Activated CD4-positive, alpha-beta memory T cell treated with anti-CD3 and anti-CD28 coated beads, Interleukin-2, amount 10 ng/mL, durations not matched to agents 7 days and 5 days (primary cell): ENCODE measurements at regions of chr5 and their contacts with region 1.

Region 1: GRCh38 chr5:373710-374602 is 52.4 kb downstream of the AHRR start:
- DNase-seq: peak; percentile 84
- H3K4me3 Mint-ChIP-seq: peak overlapping the region; percentile 67
- H3K27ac Mint-ChIP-seq: peak overlapping the region; percentile 90
- H3K4me1 Mint-ChIP-seq: peaks cover 80% of the 10 kb centered on the region
- H3K27me3 Mint-ChIP-seq: no peaks in the 10 kb centered on the region

Region 2: GRCh38 chr5:270340-270739 is 103.6 kb before region 1 on chr5:
- CTCF ChIA-PET with region 1: no interaction called
- POLR2A ChIA-PET with region 1: interaction called, 11 read pairs
- DNase-seq: no peak
- H3K4me3 Mint-ChIP-seq: peak overlapping the region; percentile 83
- H3K27ac Mint-ChIP-seq: peak overlapping the region; percentile 62
- H3K4me1 Mint-ChIP-seq: peaks cover 42% of the 10 kb centered on the region
- H3K27me3 Mint-ChIP-seq: no peaks in the 10 kb centered on the region

Region 3: DNA sequence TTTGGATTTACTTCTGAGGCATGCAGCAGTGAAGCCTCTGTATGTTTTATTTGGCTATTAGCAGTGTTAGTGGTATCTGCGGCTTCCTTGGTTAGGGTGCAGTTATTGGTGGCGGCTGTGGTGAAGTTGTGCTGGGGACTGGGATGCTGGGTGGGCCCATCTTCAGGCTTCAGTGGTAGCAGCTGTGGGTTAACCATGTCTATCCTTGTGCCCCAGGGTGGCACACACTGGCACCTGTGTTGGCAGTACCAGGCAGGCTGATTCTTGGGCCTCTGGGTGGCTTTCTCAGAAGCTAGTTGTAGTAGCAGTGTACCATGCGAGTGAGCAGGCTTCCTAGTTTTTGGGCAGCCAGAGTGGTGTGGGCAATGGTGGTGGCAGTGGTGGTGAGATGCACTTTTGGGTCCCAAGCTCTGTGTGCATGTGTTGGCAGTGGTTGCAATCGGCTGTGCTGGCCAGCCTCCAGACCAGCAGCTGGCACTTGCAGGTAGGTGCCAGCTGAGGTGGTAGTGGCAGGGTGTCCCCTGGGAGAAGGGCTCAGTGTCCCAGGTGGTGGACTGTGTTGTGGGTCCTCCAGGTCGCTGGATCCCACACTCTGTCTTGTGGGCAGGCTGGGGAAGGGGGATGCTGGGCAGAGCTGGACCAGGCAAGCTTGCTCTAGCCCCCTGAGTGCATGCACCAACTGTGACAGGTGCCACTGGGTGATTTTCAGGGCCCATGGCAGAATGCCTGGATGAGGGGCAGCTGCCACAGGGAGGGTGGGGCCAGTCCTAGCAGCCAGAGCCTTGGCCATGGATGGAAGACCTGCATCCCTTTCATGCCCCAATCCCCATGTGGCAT is 38.8 kb before region 1 on chr5:
- CTCF ChIA-PET with region 1: no interaction called
- POLR2A ChIA-PET with region 1: interaction called, 10 read pairs
- DNase-seq: no peak
- H3K4me3 Mint-ChIP-seq: peak overlapping the region; percentile 72
- H3K27ac Mint-ChIP-seq: peak overlapping the region; percentile 95
- H3K4me1 Mint-ChIP-seq: peaks cover 69% of the 10 kb centered on the region
- H3K27me3 Mint-ChIP-seq: no peaks in the 10 kb centered on the region

Region 4: GRCh38 chr5:386432-387341 is 12.7 kb after region 1 on chr5:
- CTCF ChIA-PET with region 1: no interaction called
- POLR2A ChIA-PET with region 1: interaction called, 20 read pairs
- DNase-seq: peak; percentile 11
- H3K4me3 Mint-ChIP-seq: no peak overlapping the region
- H3K27ac Mint-ChIP-seq: no peak overlapping the region
- H3K4me1 Mint-ChIP-seq: peaks cover 23% of the 10 kb centered on the region
- H3K27me3 Mint-ChIP-seq: no peaks in the 10 kb centered on the region

Region 5: DNA sequence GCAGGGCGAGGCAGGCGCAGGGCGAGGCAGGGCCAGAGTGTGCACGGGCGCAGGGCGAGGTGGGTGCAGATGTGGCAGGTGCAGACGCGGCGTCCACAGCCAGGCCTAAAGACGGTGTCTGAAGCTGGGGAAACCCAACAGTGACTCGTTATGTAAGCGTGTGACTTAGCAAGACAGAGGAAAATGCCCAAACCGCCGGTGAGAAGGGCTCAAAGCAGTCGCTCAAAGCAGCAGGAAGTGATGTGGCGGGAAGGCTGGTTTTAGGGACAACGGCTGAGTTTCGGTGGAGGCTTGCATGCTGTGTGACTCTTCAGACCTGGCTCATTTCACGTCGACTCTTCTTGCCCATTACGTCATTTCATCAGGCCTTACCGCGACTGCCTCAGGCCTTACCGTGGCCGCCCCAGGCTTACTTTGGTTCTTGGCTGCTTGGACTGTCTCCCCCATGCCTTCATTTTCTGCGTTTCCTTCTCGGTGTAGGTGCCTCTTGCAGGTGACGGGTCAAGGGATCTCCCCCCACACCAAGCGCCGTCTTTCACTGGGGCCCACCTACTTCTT is 18.6 kb after region 1 on chr5:
- CTCF ChIA-PET with region 1: interaction called, 4 read pairs
- POLR2A ChIA-PET with region 1: interaction called, 25 read pairs
- DNase-seq: peak; percentile 92
- H3K4me3 Mint-ChIP-seq: peak overlapping the region; percentile 58
- H3K27ac Mint-ChIP-seq: peak overlapping the region; percentile 89
- H3K4me1 Mint-ChIP-seq: peaks cover 37% of the 10 kb centered on the region
- H3K27me3 Mint-ChIP-seq: no peaks in the 10 kb centered on the region